ENCODE measurements at regions of chr10 and their contacts with region 1.

Region 1: GRCh38 chr10:12513775-12514673 is 164.7 kb downstream of the CAMK1D start:
- DNase-seq: no peak
- ATAC-seq: no peak

Region 2: GRCh38 chr10:12455774-12456173 is 58.2 kb before region 1 on chr10:
- intact Hi-C with region 1: loop called in 1 of 2 experiments (anchors 10 kb)
- DNase-seq: no peak
- ATAC-seq: peak; percentile 87

Region 3: GRCh38 chr10:12656518-12657142 is 142.6 kb after region 1 on chr10:
- intact Hi-C with region 1: no loop called
- DNase-seq: no peak
- ATAC-seq: peak; percentile 86